Sciatic nerve (tissue), 2 donors: ENCODE measurements at regions of chr15 and their contacts with region 1.

Region 1: GRCh38 chr15:96356494-96357455 is 26.3 kb downstream of the NR2F2 start:
- DNase-seq: peak; percentile 94
- ATAC-seq: peak; percentile 37

Region 2: GRCh38 chr15:94670438-94671034 is 1686.2 kb before region 1 on chr15:
- intact Hi-C with region 1: loop called (anchors 10 kb)
- DNase-seq: no peak
- ATAC-seq: peak; percentile 71

Region 3: GRCh38 chr15:95799286-95800200 is 557.2 kb before region 1 on chr15:
- intact Hi-C with region 1: no loop called
- DNase-seq: no peak
- ATAC-seq: no peak

Region 4: GRCh38 chr15:96416934-96417759 is 60.4 kb after region 1 on chr15:
- intact Hi-C with region 1: loop called (anchors 10 kb)
- DNase-seq: no peak
- ATAC-seq: peak; percentile 77

Region 5: DNA sequence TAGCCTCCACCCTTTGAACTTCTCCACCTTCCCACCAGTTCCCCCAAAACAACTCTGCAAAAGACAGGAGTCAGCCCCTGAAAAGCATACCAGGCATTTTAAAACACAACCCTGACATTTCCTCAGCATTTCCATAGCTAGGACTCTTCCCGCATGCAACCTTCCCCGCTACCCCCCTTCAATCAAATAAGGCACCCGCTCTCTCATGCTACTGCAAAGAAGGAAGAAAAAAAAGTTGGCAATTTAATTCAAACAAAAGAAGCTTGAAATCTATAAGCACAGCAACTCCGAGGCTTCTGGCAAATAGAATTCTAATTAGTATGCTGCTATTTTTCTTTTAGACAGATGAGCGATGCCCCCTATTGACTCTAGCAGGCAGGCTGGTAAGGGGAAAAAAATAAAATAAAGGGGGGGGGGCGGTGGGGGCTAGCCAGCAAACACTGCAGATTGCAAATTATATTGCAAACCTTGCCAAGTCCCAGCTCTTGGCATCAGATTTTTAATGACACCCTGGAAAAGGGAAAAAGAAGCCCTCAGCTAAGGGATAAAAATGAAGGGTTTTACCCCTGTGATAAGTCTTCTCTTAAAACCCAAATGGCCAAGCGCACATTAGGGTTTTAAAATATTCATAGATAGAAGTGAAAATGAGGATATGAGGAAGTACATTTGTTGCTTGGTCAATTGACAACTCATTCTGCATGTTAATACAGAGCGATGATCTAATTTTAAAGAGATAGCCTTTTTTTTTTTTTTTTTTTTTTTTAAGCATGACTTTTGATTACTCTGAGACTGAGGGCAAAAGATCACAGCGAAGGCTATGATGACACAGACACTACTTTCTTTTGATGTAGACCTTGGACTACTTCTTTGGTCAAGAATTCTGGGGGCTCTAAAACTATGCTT is 229.0 kb after region 1 on chr15:
- intact Hi-C with region 1: loop called (anchors 10 kb)
- DNase-seq: no peak
- ATAC-seq: peak; percentile 48

Region 6: GRCh38 chr15:96701443-96701842 is 344.7 kb after region 1 on chr15:
- intact Hi-C with region 1: loop called (anchors 10 kb)
- DNase-seq: no peak
- ATAC-seq: no peak

Region 7: GRCh38 chr15:96893159-96893906 is 536.6 kb after region 1 on chr15:
- intact Hi-C with region 1: loop called (anchors 5 kb)
- DNase-seq: no peak
- ATAC-seq: peak; percentile 87